ENCODE measurements at regions of chr12 and their contacts with region 1.

Region 1: DNA sequence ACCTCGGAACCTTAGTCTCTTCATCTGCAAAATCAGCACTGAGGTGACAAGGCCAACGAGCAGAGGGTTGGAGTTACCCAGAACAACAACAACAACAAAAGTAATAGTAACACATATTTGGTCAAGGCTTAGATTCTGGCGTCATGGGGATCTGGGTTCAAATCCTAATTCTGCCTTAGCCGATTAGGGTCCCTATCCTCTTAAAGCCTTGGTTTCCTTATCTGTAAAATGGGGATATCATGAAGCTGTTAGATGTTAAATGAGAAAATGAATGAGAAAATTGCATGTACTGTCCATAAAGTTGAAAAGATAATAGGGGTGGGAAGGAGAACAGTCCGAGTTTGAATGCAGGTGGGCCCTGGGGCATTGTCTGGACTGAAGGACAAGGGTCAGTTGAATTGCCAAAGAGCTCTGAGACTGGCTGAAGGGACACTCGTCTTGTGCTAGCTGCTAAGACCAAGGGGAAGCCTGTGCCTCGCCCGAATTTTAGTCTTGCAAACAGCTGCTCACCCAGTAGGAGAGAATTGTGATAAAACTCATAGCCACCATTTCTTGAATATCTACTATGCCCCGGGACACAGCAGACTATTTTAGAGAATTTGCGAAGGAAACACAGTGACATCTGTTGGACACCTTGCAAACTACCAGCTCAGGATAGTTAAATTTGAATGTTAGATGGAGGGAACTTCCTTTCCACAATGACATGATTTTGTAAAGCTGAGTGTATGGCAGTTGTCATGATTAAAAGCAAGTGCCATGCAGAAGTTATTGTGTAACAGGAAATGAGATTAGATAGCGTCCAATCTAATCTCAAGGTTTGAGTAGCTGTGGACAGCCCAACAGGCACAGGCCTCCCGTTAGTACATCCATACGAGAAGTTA is 6.8 kb upstream of the HNF1A start:
- DNase-seq: peak; percentile 56
- ATAC-seq: peak; percentile 90
- H3K4me3 Mint-ChIP-seq: no peak overlapping the region
- H3K27ac Mint-ChIP-seq: no peak overlapping the region
- H3K4me1 Mint-ChIP-seq: peaks cover 9% of the 10 kb centered on the region
- H3K27me3 Mint-ChIP-seq: peaks cover 2% of the 10 kb centered on the region

Region 2: DNA sequence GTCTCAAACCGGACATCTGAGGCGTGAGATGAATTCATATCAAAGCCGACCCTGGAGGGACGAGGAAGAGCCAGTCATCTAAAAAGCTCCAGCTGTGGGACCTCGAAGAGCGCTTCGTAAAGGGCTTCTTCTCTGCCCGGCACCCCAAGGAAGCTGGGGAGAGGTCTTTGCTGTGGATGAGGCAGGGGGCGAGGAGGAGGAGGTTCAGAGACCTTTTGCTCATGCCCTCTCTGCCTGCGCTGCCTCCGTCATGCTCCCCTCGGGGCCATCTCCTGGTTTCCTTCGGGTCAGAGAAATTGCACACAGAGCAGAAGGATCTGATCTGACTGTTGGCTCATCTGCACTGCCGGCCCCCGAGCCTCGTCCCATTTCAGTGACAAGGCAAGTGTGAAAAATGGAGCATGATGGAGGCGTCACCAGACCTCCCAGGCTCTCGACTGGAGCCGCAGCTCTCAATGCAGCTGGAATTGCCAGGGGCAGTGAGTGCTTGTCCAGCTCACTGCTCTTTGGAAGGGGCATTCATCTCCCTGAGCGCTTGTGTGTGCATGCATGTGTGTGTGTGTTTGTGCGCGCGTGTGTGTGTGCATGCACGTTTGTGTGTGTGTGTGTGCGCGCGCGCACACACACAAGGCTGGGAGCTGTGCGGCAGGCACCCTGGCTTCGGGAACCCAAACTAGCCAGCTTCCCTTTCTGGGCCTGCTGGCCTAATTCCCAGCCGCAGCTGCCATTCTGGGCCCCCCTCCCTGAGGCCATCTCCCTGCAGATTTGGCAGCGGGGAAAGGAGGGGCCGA is 321.9 kb before region 1 on chr12:
- CTCF ChIA-PET with region 1: interaction called, 49 read pairs
- POLR2A ChIA-PET with region 1: no interaction called
- DNase-seq: no peak
- ATAC-seq: peak; percentile 7
- H3K4me3 Mint-ChIP-seq: peak overlapping the region; percentile 57
- H3K27ac Mint-ChIP-seq: no peak overlapping the region
- H3K4me1 Mint-ChIP-seq: peaks cover 14% of the 10 kb centered on the region
- H3K27me3 Mint-ChIP-seq: peaks cover 54% of the 10 kb centered on the region

Region 3: DNA sequence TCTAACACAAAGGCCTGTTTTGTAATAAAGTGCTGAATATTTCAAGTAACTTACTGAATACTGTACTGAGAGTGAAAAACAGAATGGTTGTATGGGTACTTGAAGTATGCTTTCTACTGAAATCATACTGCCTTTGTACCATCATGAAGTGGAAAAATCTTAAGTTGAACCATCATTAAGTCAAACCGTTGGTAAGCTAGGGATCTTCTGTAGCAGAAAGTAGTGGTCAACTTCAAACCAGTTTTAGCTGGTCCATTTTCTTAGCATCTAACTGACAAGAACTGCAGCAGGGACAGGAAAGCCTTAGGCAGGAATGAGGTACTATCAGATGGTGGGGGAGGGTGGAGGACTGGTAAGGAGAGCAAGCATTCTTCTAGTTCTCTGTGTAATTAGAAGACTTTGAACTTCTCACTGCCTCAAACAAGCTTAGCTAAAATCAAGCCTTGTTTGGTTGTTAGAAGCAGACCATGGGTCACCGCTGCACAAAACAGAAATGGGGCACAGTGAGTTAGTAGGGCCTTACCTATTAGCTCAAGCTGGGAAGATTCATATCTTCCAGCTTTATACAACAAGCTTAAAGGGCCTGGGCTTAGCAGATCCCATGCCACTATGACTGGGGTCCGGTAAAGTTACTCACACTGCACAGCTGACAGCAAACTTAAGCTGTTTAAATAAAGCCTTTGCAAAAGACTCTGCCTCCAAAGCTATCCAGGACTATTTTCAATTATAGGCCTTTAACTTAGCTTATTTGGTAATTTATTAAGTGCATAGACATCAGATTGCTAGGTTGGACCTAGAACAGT is 172.1 kb before region 1 on chr12:
- CTCF ChIA-PET with region 1: interaction called, 14 read pairs
- POLR2A ChIA-PET with region 1: no interaction called
- DNase-seq: no peak
- ATAC-seq: no peak
- H3K4me3 Mint-ChIP-seq: no peak overlapping the region
- H3K27ac Mint-ChIP-seq: no peak overlapping the region
- H3K4me1 Mint-ChIP-seq: peaks cover 30% of the 10 kb centered on the region
- H3K27me3 Mint-ChIP-seq: no peaks in the 10 kb centered on the region

Region 4: DNA sequence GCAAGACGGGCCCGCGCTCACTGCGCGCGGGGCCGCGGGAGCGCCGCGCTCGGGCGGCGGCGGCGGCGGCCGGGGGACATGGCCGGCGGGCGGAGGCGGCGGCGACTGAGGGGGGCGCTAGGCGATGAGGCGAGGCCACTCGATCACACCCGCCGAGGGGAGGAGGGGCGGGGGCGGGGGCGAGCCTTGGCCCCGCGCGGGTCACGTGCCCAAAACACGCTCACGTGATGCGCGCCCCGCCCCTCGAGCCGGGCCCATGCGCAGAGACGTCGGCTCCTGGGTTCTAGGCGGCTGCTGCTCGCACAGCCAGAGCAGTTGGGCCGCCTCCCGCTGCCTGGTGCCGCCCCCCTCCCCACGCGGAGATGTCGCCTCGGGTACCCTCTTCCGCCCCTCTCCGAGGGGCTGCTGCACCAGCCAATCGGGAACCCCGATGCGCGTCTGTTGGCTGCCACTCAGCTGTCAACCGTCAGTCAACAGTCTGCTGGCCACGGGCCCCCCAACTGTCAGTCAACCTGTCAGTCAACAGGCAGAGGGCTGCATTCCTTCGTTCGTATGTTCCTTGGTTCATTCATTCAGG is 67.3 kb before region 1 on chr12 and contains the start of gene SPPL3:
- CTCF ChIA-PET with region 1: interaction called, 16 read pairs
- POLR2A ChIA-PET with region 1: interaction called, 3 read pairs
- DNase-seq: peak; percentile 94
- ATAC-seq: peak; percentile 81
- H3K4me3 Mint-ChIP-seq: peak within 1 kb of the TSS; percentile 99
- H3K27ac Mint-ChIP-seq: peak within 1 kb of the TSS; percentile 96
- H3K4me1 Mint-ChIP-seq: peaks cover 27% of the 10 kb centered on the region
- H3K27me3 Mint-ChIP-seq: peaks cover 2% of the 10 kb centered on the region
- total RNA-seq, gene SPPL3: 23.3 to 27.8 TPM

Region 5: GRCh38 chr12:120955232-120955631 is 16.3 kb before region 1 on chr12:
- CTCF ChIA-PET with region 1: interaction called, 52 read pairs
- POLR2A ChIA-PET with region 1: interaction called, 4 read pairs
- DNase-seq: no peak
- ATAC-seq: no peak
- H3K4me3 Mint-ChIP-seq: no peak overlapping the region
- H3K27ac Mint-ChIP-seq: no peak overlapping the region
- H3K4me1 Mint-ChIP-seq: peaks cover 15% of the 10 kb centered on the region
- H3K27me3 Mint-ChIP-seq: no peaks in the 10 kb centered on the region

Region 6: GRCh38 chr12:121274036-121274763 is 302.7 kb after region 1 on chr12:
- CTCF ChIA-PET with region 1: no interaction called
- POLR2A ChIA-PET with region 1: no interaction called
- DNase-seq: no peak
- ATAC-seq: no peak
- H3K4me3 Mint-ChIP-seq: no peak overlapping the region
- H3K27ac Mint-ChIP-seq: no peak overlapping the region
- H3K4me1 Mint-ChIP-seq: peaks cover 4% of the 10 kb centered on the region
- H3K27me3 Mint-ChIP-seq: no peaks in the 10 kb centered on the region

Measured in activated CD8-positive, alpha-beta T cell treated with anti-CD3 and anti-CD28 coated beads, Interleukin-2, amount 10 ng/mL, durations not matched to agents 7 days and 5 days (primary cell).